ENCODE measurements at regions of chr10 and their contacts with region 1.

Region 1: DNA sequence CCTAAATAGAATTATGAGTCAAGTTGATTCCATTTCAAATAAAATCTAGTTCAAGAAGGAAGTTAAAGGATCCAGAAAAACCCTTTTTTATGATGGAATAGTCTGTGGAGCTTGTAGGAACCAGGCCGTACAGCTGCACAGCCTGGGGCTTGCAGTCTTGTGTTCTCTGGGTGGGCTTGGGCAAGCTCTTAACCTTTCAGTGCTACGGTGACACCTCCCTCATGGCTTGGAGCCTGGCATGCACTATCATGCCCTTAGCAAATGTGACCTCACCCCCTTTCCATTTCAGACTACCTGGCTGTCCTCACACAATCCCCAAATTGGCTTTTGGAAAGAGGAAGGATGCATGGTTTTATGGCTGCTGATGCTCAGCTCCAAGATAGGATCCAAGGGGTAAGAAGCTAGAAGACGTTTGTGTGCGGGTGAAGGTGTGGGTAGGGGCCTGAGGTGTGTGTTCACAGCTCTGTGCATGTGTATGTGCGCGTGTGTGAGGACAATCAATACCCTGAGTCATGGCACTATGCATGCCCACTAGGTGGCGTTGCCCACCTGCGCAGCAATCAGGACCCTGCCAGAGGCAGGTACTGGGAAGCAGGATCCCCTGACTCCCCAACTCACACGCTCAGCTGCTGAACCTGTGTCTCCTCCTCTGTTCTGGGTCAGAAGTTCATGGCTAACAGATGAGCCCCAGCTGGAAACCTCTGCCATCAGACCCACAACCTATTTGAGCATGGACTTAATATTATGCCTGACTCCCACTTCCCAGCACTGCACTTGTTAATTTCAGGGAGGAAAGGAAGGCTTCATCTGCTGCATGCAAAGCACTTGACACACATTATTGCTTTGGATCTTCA is 113.4 kb downstream of the PTPN20 start:
- DNase-seq: peak; percentile 53
- ATAC-seq: peak; percentile 90
- H3K4me3 ChIP-seq: no peak overlapping the region
- H3K27ac ChIP-seq: no peak overlapping the region
- H3K4me1 ChIP-seq: peaks cover 14% of the 10 kb centered on the region
- H3K27me3 ChIP-seq: peaks cover 4 to 30% of the 10 kb centered on the region in 2 experiments
- CTCF ChIP-seq: peak; percentile 94
- EP300 ChIP-seq: no peak
- POLR2A ChIP-seq: no peak
- RAD21 ChIP-seq: peak; percentile 78

Region 2: GRCh38 chr10:47047671-47048525 is 23.3 kb after region 1 on chr10:
- CTCF ChIA-PET with region 1: no interaction called
- POLR2A ChIA-PET with region 1: no interaction called
- in situ Hi-C with region 1: no loop called
- intact Hi-C with region 1: loop called (anchors 1 kb)
- DNase-seq: peak; percentile 41
- ATAC-seq: peak; percentile 88
- H3K4me3 ChIP-seq: no peak overlapping the region
- H3K27ac ChIP-seq: no peak overlapping the region
- H3K4me1 ChIP-seq: no peaks in the 10 kb centered on the region
- H3K27me3 ChIP-seq: peaks cover 2 to 7% of the 10 kb centered on the region in 2 experiments; a peak in 1 of 5 replicates
- CTCF ChIP-seq: peak; percentile 88
- EP300 ChIP-seq: no peak
- POLR2A ChIP-seq: no peak
- RAD21 ChIP-seq: peak; percentile 70

Region 3: DNA sequence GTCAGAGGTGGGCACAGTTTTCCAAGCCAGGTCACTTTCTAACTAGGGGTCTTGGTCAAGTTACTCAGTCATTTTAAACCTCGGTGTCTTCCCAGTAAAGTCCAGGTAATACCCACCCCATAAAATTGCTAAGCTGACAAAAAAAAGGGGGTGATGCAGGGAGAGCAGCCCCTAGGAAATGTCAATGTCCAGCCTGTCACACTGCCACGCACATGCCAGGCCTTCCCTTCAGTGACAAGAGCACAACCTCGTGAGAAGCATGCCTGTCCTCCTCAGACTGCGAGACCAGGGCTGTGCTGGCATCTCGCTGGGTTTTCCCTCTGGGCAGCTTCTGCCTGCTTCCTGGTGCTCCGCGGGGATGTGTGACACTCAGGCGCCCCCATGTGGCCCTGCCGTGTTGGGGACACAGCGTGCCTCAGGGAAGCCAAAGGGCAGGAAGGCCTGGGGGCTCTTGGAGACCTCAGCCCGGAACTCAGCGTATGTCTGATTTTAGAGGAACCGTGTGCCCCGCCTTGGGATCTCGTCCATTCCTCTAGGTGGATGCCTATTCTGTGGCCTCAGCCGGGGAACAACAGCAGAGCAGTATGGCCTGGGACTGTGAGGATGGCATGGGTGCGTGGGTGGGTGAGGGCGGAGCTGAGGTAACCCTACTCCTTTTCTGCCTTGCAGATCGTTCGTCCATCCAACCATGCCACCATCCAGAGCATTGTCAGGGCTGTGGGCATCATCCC is 287.5 kb after region 1 on chr10:
- CTCF ChIA-PET with region 1: interaction called, 18 read pairs
- POLR2A ChIA-PET with region 1: no interaction called
- in situ Hi-C with region 1: loop called (anchors 10 kb)
- intact Hi-C with region 1: loop called (anchors 1 kb)
- DNase-seq: peak; percentile 48
- ATAC-seq: peak; percentile 96
- H3K4me3 ChIP-seq: no peak overlapping the region
- H3K27ac ChIP-seq: no peak overlapping the region
- H3K4me1 ChIP-seq: no peaks in the 10 kb centered on the region
- H3K27me3 ChIP-seq: peaks cover 4 to 15% of the 10 kb centered on the region in 2 experiments; a peak in 3 of 5 replicates
- CTCF ChIP-seq: peak; percentile 95
- EP300 ChIP-seq: no peak
- POLR2A ChIP-seq: no peak
- RAD21 ChIP-seq: peak; percentile 90